ENCODE measurements at regions of chr2 and their contacts with region 1.

Region 1: DNA sequence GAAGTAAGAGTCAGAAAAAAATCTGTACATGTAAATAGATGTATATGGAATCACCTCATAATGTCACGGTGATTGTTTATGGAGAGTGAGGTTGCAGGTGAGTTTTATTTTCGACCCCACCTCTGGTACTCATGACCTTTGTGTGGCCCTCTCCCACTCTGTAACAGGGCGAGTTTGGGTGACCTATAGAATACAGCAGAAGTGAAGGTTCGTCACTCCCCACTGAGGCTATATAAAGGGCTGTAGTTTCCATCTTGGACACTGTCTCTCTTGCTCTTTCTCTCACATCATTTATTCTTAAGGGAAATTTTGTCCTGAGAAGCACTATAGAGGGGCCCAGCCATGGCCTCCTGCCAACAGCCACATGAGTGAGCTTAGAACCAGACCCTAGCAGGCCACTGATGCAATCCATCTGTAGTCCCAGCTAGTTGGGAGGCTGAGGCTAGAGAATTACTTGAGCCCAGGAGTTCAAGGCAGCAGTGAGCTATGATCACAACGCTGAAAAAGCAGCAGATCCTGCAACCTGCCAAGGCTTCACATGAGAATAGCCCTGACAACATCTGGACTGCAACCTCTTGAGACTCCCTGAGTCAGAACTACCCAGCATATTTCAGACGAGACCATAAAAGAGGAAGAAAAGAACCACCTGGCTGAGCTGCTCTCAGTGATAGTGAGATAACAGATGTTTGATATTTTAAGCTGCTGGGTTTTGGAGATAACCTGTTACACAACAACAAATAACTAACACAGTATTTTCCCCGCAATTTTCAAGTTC is 74.3 kb upstream of the SLC1A4 start:
- DNase-seq: peak; percentile 55
- H3K4me3 ChIP-seq: no peak overlapping the region
- H3K27ac ChIP-seq: no peak overlapping the region
- H3K27me3 ChIP-seq: peaks cover 25% of the 10 kb centered on the region
- CTCF ChIP-seq: no peak

Region 2: GRCh38 chr2:63334910-63335309 is 1580.0 kb before region 1 on chr2:
- CTCF ChIA-PET with region 1: no interaction called
- POLR2A ChIA-PET with region 1: no interaction called
- DNase-seq: no peak
- H3K4me3 ChIP-seq: no peak overlapping the region
- H3K27ac ChIP-seq: no peak overlapping the region
- H3K27me3 ChIP-seq: no peaks in the 10 kb centered on the region
- CTCF ChIP-seq: no peak

Region 3: DNA sequence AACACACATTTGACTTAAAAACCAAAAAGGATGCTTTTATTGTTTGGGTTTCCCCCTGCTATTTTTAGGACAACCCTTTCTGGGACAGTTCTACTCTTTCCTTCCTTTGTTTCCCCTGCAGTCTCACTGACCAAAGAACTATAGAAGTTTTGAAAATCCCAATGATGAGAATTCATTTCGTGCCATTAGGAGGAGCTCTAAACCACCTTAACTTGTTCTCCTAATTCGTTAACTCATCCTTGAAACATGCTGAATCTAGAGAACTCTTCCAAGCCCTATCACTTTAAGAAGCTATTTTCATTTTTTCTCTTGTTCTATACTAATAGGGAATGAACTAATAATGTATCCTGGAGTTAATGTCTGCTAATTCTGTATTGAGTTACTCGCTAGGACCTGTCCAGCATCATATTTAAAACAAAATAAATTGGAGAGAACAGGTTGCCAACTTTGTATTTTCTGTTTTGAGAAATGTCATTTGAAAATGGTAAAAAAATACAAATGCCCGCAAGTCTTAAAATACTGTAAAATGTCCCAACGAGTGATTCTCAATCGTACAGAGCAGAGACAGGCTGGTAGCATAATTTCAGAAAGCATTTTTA is 327.9 kb before region 1 on chr2:
- CTCF ChIA-PET with region 1: interaction called, 13 read pairs
- POLR2A ChIA-PET with region 1: no interaction called
- DNase-seq: peak; percentile 11
- H3K4me3 ChIP-seq: no peak overlapping the region
- H3K27ac ChIP-seq: no peak overlapping the region
- H3K27me3 ChIP-seq: no peaks in the 10 kb centered on the region
- CTCF ChIP-seq: peak; percentile 70

Region 4: GRCh38 chr2:64988420-64989125 is 73.7 kb after region 1 on chr2:
- CTCF ChIA-PET with region 1: interaction called, 16 read pairs
- POLR2A ChIA-PET with region 1: interaction called, 9 read pairs
- DNase-seq: peak; percentile 77
- H3K4me3 ChIP-seq: peak overlapping the region; percentile 88
- H3K27ac ChIP-seq: peak overlapping the region; percentile 99
- H3K27me3 ChIP-seq: no peaks in the 10 kb centered on the region
- CTCF ChIP-seq: peak; percentile 54

Region 5: DNA sequence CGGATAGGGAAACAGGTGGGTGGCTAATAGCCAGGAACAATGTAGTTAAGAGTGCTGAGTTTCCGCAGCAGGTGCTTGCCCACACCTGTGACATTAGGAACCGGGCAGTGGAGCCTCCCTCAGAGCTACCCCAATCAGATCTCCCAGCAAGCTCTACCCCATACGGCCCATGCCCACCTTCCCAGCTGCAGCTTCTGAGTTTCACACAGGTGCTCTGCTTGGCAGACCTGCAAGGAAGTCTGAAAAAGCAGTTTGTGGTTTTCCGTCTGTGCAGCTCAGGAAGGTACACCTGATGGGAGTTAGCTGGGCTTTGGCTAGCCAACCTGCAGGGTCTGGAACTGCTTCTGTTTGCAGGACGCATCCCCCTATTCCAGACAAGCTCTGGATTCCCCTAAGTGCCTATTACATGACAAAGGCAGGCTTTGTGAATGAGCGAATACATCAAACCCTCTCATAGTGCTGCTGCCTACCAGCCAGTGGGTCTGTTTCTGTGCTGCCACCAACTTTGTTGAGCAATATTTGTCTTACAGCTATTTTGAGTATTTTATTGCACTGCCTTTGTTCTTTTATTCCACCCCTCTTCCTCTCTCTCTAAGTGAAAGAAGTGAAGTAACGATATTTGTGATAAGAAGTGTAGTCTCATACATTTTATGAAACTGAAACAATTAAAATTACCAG is 116.6 kb after region 1 on chr2:
- CTCF ChIA-PET with region 1: interaction called, 61 read pairs
- POLR2A ChIA-PET with region 1: no interaction called
- DNase-seq: no peak
- H3K4me3 ChIP-seq: no peak overlapping the region
- H3K27ac ChIP-seq: no peak overlapping the region
- H3K27me3 ChIP-seq: peaks cover 3% of the 10 kb centered on the region
- CTCF ChIP-seq: no peak

Region 6: DNA sequence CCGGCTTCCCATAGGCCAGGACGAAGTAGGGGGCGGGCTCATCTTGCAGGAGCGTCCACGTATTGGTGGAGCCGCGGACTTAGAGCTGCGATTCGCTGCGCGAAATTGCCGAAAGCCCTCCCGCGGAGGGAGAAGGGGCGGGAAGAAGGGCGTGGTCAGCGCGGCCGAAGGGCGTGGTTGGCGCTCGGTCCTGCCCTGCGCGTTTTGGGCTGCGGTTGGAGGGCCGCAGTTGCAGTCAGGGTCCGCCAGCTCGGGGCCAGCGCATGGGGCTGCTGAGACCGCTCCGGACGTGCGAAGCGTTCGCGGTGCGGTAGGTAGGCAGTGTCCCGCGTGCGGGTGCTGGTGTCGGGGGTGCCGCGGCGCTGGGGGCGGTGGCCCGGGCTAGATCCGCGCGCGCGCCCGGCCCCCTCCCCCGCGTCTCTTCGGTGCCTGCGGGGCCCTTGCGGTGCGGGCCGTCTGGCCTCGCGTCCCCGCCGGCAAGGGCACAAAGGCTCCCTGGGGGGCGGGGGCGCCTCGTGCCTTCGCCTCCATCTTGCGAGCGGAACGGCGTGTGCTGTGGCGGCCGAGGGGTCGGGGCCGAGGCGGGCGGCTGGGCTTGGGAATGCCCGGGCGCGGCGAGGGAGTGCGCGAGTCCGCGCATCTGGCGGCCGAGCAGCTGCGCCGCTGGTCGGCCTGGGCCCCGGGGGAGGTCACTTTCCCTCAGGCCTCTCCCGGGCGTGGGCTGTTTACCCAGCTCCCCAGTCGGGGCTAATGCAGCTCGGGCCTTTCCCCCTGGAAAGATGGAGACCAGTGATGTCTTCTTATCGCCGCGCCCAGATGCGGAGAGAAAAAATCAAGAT is 141.5 kb after region 1 on chr2 and contains the start of gene CEP68:
- CTCF ChIA-PET with region 1: interaction called, 12 read pairs
- POLR2A ChIA-PET with region 1: no interaction called
- DNase-seq: peak; percentile 93
- H3K4me3 ChIP-seq: peak within 1 kb of the TSS; percentile 78
- H3K27ac ChIP-seq: no peak within 1 kb of the TSS
- H3K27me3 ChIP-seq: no peaks in the 10 kb centered on the region
- CTCF ChIP-seq: no peak
- polyA plus RNA-seq, gene CEP68: 7.3 and 7.9 TPM in 2 replicates